ENCODE measurements at regions of chrX and their contacts with region 1.

Region 1: GRCh38 chrX:11579636-11580600 is 85.8 kb downstream of the ARHGAP6 start:
- DNase-seq: no peak
- H3K4me3 ChIP-seq: no peak overlapping the region
- H3K27ac ChIP-seq: no peak overlapping the region
- H3K4me1 ChIP-seq: no peaks in the 10 kb centered on the region
- H3K27me3 ChIP-seq: peaks cover 0 to 12% of the 10 kb centered on the region in 2 donors
- CTCF ChIP-seq: no peak
- POLR2A ChIP-seq: no peak

Region 2: GRCh38 chrX:10648614-10649013 is 931.3 kb before region 1 on chrX:
- intact Hi-C with region 1: loop called (anchors 5 kb)
- DNase-seq: no peak
- H3K4me3 ChIP-seq: no peak overlapping the region
- H3K27ac ChIP-seq: no peak overlapping the region
- H3K4me1 ChIP-seq: no peaks in the 10 kb centered on the region
- H3K27me3 ChIP-seq: peaks cover 0 to 18% of the 10 kb centered on the region in 2 donors
- CTCF ChIP-seq: no peak
- POLR2A ChIP-seq: no peak

Measured in breast epithelium (tissue), 4 donors.